ENCODE measurements at regions of chr2 and their contacts with region 1.

Region 1: DNA sequence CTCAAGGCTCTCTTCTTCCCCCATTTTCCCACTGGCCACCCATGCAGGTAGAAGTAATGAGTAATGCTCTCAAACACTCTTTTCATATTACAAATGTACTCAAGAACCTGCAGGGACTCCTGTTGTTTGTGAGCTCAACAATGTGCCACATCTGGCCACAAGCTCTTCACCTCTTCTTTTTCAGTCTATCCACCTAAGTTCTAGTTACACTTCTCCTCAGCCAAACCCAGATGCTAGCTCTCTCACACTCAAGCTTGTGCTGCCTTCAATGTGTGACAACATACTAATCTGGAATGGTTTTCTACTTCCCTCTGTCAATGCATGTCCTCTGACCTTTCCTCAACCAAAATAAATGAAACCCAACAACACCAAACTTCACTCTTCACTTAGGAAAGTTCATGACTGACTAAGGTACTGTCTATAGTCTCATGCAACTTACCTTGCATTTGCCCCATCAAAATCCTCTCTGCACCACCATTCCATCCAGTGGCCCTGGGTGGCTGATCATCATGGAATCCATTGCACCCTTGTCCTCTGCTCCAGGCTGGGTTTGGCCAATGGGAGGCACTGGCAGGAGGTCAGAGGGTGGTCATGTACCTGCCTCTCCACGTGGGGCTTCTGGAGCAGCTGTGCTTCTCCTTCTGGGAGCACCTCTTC is 5.3 kb upstream of the IL18R1 start:
- H3K4me3 Mint-ChIP-seq: no peak overlapping the region
- H3K27ac Mint-ChIP-seq: no peak overlapping the region
- H3K4me1 Mint-ChIP-seq: peaks cover 8% of the 10 kb centered on the region
- H3K27me3 Mint-ChIP-seq: peaks cover 21% of the 10 kb centered on the region

Region 2: GRCh38 chr2:102268510-102269209 is 81.6 kb before region 1 on chr2:
- intact Hi-C with region 1: loop called (anchors 5 kb)
- H3K4me3 Mint-ChIP-seq: no peak overlapping the region
- H3K27ac Mint-ChIP-seq: no peak overlapping the region
- H3K4me1 Mint-ChIP-seq: peaks cover 20% of the 10 kb centered on the region
- H3K27me3 Mint-ChIP-seq: peaks cover 45% of the 10 kb centered on the region

Region 3: DNA sequence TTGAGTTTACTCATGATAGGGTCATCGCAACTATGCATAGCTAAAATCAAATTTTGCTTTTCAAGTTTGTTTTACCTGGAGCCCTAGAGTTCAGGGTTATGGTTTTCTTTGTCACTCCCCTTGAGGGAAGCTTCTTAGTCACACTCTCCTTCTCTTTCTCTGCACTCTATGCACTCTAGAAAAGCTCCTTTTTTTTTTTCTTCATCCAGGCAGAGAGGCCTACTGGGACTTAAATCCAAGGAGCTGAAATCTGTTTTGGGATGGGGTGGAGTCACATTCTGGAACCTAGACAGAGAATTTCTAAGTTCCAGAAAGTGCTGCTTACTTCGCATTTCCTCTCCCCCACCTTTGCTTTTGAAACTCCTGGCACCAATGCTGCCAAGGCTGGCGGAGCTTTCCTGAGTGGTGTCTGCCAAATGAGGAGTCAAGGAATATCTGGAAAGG is 13.7 kb before region 1 on chr2:
- intact Hi-C with region 1: no loop called
- H3K4me3 Mint-ChIP-seq: no peak overlapping the region
- H3K27ac Mint-ChIP-seq: no peak overlapping the region
- H3K4me1 Mint-ChIP-seq: no peaks in the 10 kb centered on the region
- H3K27me3 Mint-ChIP-seq: peaks cover 23% of the 10 kb centered on the region

Region 4: DNA sequence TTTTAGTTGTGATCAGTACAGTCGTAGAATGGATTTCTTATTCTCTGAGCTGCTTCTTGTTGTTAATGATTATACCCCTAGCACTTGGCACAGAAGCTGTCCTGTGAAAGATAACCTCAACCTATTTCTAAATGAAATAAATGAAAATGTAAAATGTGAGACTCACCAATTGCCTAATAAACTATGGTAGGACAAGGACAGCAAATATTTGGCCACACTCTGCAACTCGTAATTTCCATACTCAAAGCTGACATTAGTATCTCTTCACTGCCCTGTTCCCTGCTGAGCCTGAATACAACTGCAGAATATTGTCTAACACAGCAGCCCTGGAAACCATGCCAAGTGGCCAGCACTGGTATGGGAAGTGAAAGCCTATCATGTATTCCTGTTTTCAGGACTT is 446.1 kb after region 1 on chr2:
- intact Hi-C with region 1: no loop called
- H3K4me3 Mint-ChIP-seq: no peak overlapping the region
- H3K27ac Mint-ChIP-seq: no peak overlapping the region
- H3K4me1 Mint-ChIP-seq: peaks cover 5% of the 10 kb centered on the region
- H3K27me3 Mint-ChIP-seq: no peaks in the 10 kb centered on the region

Measured in dendritic cell treated with granulocyte-macrophage colony-stimulating factor and Interleukin-4, amounts not matched to agents 40 ng/mL and 50 ng/mL, for 4 days (primary cell).